CD4-positive, alpha-beta memory T cell (primary cell): ENCODE measurements at regions of chr14 and their contacts with region 1.

Region 1: GRCh38 chr14:20690848-20691523 is 2.4 kb downstream of the ANG start:
- DNase-seq: peak; percentile 55 to 69 (median 65)
- H3K4me3 ChIP-seq: no peak overlapping the region
- H3K4me3 Mint-ChIP-seq: no peak overlapping the region
- H3K27ac ChIP-seq: no peak overlapping the region
- H3K27ac Mint-ChIP-seq: peak overlapping the region in 1 of 7 donors; percentile 3
- H3K4me1 ChIP-seq: no peaks in the 10 kb centered on the region
- H3K4me1 Mint-ChIP-seq: peaks cover 5 to 6% (median 6%) of the 10 kb centered on the region in 4 donors
- H3K27me3 ChIP-seq: no peaks in the 10 kb centered on the region
- H3K27me3 Mint-ChIP-seq: no peaks in the 10 kb centered on the region

Region 2: GRCh38 chr14:20550926-20551325 is 140.1 kb before region 1 on chr14:
- CTCF ChIA-PET with region 1: no interaction called
- POLR2A ChIA-PET with region 1: no interaction called
- intact Hi-C with region 1: no loop called
- DNase-seq: no peak
- H3K4me3 ChIP-seq: no peak overlapping the region
- H3K4me3 Mint-ChIP-seq: no peak overlapping the region
- H3K27ac ChIP-seq: no peak overlapping the region
- H3K27ac Mint-ChIP-seq: no peak overlapping the region
- H3K4me1 ChIP-seq: no peaks in the 10 kb centered on the region
- H3K4me1 Mint-ChIP-seq: no peaks in the 10 kb centered on the region
- H3K27me3 ChIP-seq: no peaks in the 10 kb centered on the region
- H3K27me3 Mint-ChIP-seq: peaks cover 2 to 3% of the 10 kb centered on the region in 2 donors

Region 3: DNA sequence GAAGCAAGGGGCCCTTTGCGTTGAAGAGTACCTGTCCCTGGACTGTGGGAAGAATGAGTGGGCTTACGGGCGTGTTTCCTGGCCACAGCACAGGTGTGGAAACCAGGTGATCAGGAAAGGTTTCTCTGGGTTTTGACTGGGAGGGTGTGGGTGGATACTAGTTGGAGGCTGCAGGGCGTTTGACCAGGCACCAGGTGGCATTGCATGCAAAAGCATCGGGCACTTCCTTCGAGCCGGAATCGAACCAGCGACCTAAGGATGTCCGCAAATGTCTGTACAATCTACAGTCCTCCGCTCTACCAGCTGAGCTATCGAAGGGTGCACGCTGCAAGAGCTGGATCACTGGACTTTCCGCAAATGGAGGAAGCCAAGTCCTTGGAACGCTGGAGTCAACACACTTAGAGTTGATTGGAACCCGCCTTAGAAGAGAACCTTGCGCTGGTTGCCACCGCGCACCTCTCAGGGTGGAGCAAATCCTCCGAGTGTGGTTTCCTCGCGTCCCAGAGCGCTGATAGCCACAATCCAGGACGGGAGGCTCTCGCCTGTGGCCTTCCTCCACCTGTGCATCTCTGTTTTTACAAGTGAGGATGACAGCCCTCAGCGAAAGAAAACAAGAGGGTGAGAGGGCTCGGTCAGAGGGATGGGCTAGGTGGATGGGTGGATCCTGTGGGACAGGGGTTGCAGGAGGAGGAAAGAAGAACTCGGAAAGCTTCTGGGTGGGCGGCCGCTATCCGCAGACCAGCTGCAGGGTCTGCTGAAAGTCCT is 27.8 kb before region 1 on chr14:
- CTCF ChIA-PET with region 1: interaction called, 349 read pairs
- POLR2A ChIA-PET with region 1: interaction called, 9 read pairs
- intact Hi-C with region 1: loop called (anchors 1 kb)
- DNase-seq: peak; percentile 74 to 78 (median 77)
- H3K4me3 ChIP-seq: peak overlapping the region; percentile 43 to 54
- H3K4me3 Mint-ChIP-seq: peak overlapping the region; percentile 78 to 88 (median 81)
- H3K27ac ChIP-seq: no peak overlapping the region
- H3K27ac Mint-ChIP-seq: peak overlapping the region in 6 of 7 donors; percentile 0 to 82 (median 50)
- H3K4me1 ChIP-seq: peaks cover 28% of the 10 kb centered on the region
- H3K4me1 Mint-ChIP-seq: peaks cover 18 to 38% (median 24%) of the 10 kb centered on the region in 4 donors
- H3K27me3 ChIP-seq: no peaks in the 10 kb centered on the region
- H3K27me3 Mint-ChIP-seq: peaks cover 5 to 6% of the 10 kb centered on the region in 2 donors

Region 4: DNA sequence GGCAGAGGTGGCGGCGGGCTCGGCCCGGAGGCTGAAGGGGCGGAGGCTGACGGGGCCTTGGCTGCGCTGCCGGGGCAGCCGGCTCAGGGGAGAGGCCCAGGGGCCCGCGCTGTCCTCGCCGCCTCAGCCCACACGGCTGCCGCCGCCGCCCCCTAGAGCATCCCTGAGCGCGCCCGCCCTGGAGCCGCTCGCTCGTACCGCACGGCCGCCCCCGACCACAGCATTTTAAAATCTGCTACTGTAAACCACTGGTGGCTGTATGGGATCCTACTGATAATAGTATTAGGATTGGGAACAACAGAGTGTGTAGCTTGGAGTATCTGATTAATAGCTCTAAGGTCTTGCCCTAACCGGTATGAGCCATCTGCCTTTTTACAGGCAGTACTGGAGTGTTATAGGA is 32.5 kb after region 1 on chr14:
- CTCF ChIA-PET with region 1: no interaction called
- POLR2A ChIA-PET with region 1: no interaction called
- intact Hi-C with region 1: no loop called
- DNase-seq: no peak
- H3K4me3 ChIP-seq: no peak overlapping the region
- H3K4me3 Mint-ChIP-seq: peak overlapping the region in 1 of 8 donors; percentile 13
- H3K27ac ChIP-seq: no peak overlapping the region
- H3K27ac Mint-ChIP-seq: no peak overlapping the region
- H3K4me1 ChIP-seq: no peaks in the 10 kb centered on the region
- H3K4me1 Mint-ChIP-seq: peaks cover 0 to 9% (median 2%) of the 10 kb centered on the region in 4 donors
- H3K27me3 ChIP-seq: peaks cover 5% of the 10 kb centered on the region
- H3K27me3 Mint-ChIP-seq: peaks cover 45 to 62% of the 10 kb centered on the region in 2 donors